ENCODE measurements at regions of chr14 and their contacts with region 1.

Region 1: DNA sequence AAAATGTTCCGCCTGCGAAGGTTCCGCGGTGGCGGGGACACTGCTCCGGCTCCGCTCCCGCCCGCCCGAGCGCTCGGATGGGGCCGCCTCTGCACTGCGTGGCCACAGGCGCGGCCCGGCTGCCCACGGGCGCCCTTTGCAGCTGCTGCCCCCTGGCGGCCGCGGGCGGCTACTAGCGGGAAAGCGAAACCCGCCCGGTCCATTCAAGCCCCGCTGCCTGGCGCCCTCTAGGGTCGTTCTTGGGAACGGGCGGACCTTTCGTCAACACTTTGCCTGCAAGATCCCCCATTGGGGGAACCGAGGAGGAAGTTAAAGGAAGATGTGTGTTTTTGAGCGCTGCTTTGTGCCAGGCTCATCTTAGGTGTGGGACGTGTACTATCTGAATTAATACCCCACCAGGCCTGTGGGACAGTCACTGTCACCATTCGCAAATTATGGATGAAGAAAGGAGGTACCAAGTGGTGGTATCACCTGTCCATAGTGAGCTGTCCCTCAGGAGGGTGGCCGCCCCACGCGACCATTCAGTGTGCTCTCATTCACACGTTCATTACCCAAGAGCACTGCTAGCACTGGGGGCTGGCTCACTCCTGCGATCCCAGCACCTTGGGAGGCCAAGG is 19.4 kb downstream of the GPR132 start:
- DNase-seq: peak; percentile 96

Region 2: DNA sequence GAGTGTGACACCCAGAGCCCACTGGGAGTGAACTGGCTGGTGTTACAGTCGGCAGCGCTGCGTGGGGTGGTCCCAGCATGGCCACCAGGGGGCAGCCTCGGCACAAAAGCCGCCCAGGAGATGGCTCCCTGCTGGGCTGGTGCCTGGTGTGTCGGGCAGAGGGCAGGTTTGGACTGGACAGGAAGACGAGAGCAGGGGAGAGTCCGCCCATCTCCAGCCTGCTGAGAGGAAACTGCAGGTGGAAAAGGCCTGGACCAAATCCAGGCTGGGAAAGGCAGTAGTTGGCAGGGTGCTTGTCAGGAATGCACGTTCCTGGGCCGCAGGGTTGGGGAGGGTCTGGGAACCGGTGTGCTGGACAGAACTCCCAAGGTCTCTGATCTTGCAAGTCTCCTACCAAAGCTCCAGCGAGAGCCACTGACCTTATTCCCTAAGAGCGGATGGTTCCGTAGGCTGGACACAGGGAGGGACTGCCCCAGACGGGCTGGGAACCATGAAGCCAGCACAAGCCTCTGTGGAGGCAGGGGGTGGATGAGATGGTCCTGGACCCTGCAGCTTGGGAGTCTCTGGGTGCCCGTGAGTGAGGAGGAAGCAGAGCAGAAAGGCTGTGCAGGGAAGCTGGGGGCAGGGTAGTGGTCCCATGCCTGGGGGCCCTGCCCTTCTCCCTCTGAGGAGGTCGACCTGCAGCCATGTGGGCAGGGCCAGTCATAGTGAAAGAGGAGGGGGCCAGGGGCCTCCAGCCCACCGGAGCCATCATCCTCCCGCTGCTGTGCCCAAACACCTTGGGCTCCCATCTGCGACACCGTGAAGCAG is 69.4 kb before region 1 on chr14:
- in situ Hi-C with region 1: loop called (anchors 10 kb)
- DNase-seq: peak; percentile 90